ENCODE measurements at regions of chr2 and their contacts with region 1.

Region 1: DNA sequence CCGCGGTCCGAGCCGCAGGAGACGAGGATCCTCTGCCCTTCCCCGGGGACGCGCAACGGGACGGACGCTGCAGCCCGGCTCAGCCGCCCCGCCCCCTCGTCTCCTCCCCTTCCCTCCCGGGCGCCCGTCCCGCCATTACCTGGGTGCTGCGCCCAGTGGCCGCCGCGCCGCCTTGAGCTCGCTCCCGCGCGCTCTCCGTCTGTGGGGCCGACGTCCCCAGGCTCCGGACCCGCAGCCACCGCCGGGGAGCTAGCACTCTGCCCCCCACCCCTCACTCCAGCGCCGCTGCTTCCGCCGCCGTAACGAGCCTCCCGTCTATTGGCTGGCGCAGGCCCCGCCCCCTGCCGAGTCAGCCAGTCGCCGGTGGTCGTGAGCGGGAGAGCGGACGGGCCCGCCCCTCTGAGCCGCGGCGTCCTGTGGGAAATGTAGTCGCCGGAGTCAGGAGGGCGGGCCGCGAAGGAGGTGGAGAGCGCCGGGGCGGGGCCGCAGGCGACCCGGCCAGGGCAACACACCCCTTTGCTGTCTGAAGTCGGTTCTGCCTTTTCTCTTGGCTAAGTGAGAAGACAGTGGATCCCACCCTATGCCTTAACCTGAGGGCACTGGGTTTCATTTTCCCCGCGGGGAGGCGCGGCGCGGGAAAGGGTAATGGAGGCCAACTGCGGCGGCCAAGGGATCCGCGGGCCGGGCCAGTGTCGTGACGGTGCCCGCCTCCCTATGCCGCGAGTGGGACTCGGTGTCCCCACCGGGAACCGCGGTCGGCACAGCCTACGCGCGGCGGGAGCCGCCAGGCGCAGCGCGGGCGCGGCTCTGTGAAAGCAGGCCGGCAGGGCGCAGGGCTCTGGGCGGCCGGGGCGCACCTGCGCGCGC is at the start of gene SAP130:
- DNase-seq: peak; percentile 99
- H3K4me3 Mint-ChIP-seq: peak within 1 kb of the TSS; percentile 97
- H3K27ac Mint-ChIP-seq: peak within 1 kb of the TSS; percentile 80
- H3K4me1 Mint-ChIP-seq: peaks cover 16% of the 10 kb centered on the region
- H3K27me3 Mint-ChIP-seq: no peaks in the 10 kb centered on the region
- total RNA-seq, gene SAP130: 21.8 to 25.7 TPM

Region 2: DNA sequence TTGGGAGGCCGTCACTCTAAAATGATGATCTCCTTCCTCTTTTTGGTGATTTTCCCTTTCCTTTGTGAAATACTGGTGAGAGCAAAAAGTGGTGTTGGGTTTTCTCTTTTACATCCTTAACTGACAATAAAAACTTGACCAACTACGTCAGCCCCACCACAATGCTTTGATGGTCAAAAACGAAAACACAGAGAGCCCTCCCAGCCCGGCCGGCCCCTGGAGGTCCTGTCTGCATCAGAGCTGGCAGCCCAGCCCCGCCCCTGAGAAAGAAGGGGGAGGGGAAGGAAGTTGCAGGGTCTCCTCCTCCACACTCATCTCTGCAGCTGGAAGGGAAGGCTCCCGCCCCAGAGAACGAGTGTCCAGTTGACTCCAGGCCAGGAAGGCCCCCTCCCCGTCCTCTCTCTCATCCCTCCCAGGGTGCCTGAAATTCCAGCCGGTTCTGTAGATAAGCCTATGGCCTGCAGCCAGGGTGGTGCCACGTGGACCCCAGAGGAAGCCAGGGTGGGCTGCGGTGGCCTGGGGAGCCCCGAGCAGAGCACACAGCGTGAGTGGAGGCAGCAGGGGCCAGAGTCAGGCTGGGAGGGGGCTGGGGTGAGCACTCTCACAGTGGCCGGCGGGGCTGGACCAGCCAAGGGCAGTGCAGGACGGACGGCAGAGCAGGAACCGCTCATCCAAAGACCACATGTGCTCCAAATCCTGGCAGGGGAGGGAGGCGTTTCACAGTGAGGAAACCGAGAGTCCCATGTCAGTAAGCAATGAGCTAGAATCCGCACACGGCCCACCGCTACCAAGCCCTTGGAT is 940.8 kb before region 1 on chr2:
- CTCF ChIA-PET with region 1: no interaction called
- POLR2A ChIA-PET with region 1: no interaction called
- intact Hi-C with region 1: loop called (anchors 10 kb)
- DNase-seq: no peak
- H3K4me3 Mint-ChIP-seq: no peak overlapping the region
- H3K27ac Mint-ChIP-seq: no peak overlapping the region
- H3K4me1 Mint-ChIP-seq: peaks cover 16% of the 10 kb centered on the region
- H3K27me3 Mint-ChIP-seq: peaks cover 3% of the 10 kb centered on the region

Region 3: DNA sequence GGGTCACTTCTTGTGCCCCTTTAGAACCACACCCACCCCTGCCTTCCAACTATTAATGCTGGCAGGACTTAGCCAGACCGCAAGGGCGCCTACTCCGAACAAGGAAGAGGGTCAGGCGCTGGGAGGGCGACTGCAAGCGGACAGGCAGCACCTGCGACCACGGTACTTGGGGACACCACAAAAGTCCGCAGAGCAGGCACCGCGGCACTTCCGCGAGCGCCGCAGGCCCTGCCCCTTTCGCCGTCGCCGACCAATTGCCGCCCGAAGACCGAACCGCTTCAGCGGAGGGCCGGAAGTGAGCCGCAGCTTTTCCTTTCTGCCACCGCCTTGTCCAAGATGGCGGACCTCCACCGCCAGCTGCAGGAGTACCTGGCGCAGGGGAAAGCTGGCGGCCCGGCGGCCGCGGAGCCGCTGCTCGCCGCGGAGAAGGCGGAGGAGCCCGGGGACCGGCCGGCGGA is 326.8 kb before region 1 on chr2 and contains the start of gene SFT2D3:
- CTCF ChIA-PET with region 1: no interaction called
- POLR2A ChIA-PET with region 1: interaction called, 4 read pairs
- intact Hi-C with region 1: loop called (anchors 5 kb)
- DNase-seq: peak; percentile 95
- H3K4me3 Mint-ChIP-seq: peak within 1 kb of the TSS; percentile 92
- H3K27ac Mint-ChIP-seq: peak within 1 kb of the TSS; percentile 95
- H3K4me1 Mint-ChIP-seq: peaks cover 37% of the 10 kb centered on the region
- H3K27me3 Mint-ChIP-seq: no peaks in the 10 kb centered on the region
- total RNA-seq, gene SFT2D3: 3.1 to 3.6 TPM

Region 4: GRCh38 chr2:127857265-127857808 is 170.7 kb before region 1 on chr2:
- CTCF ChIA-PET with region 1: no interaction called
- POLR2A ChIA-PET with region 1: no interaction called
- intact Hi-C with region 1: loop called (anchors 2 kb)
- DNase-seq: peak; percentile 14
- H3K4me3 Mint-ChIP-seq: peak overlapping the region; percentile 88
- H3K27ac Mint-ChIP-seq: peak overlapping the region; percentile 77
- H3K4me1 Mint-ChIP-seq: peaks cover 51% of the 10 kb centered on the region
- H3K27me3 Mint-ChIP-seq: no peaks in the 10 kb centered on the region

Region 5: GRCh38 chr2:127884436-127885345 is 143.3 kb before region 1 on chr2:
- CTCF ChIA-PET with region 1: no interaction called
- POLR2A ChIA-PET with region 1: no interaction called
- intact Hi-C with region 1: loop called (anchors 2 kb)
- DNase-seq: no peak
- H3K4me3 Mint-ChIP-seq: peak overlapping the region; percentile 84
- H3K27ac Mint-ChIP-seq: peak overlapping the region; percentile 77
- H3K4me1 Mint-ChIP-seq: peaks cover 49% of the 10 kb centered on the region
- H3K27me3 Mint-ChIP-seq: no peaks in the 10 kb centered on the region

Region 6: GRCh38 chr2:128057334-128057733 is 29.3 kb after region 1 on chr2:
- CTCF ChIA-PET with region 1: no interaction called
- POLR2A ChIA-PET with region 1: no interaction called
- intact Hi-C with region 1: no loop called
- DNase-seq: no peak
- H3K4me3 Mint-ChIP-seq: no peak overlapping the region
- H3K27ac Mint-ChIP-seq: no peak overlapping the region
- H3K4me1 Mint-ChIP-seq: no peaks in the 10 kb centered on the region
- H3K27me3 Mint-ChIP-seq: peaks cover 10% of the 10 kb centered on the region